Breast epithelium (tissue), 4 donors: ENCODE measurements at regions of chr5 and their contacts with region 1.

Region 1: GRCh38 chr5:1564182-1564748 is 40.5 kb upstream of the LPCAT1 start:
- DNase-seq: no peak
- H3K4me3 ChIP-seq: no peak overlapping the region
- H3K27ac ChIP-seq: no peak overlapping the region
- H3K4me1 ChIP-seq: no peaks in the 10 kb centered on the region
- H3K27me3 ChIP-seq: peaks cover 0 to 8% of the 10 kb centered on the region in 2 donors
- CTCF ChIP-seq: no peak
- POLR2A ChIP-seq: no peak

Region 2: DNA sequence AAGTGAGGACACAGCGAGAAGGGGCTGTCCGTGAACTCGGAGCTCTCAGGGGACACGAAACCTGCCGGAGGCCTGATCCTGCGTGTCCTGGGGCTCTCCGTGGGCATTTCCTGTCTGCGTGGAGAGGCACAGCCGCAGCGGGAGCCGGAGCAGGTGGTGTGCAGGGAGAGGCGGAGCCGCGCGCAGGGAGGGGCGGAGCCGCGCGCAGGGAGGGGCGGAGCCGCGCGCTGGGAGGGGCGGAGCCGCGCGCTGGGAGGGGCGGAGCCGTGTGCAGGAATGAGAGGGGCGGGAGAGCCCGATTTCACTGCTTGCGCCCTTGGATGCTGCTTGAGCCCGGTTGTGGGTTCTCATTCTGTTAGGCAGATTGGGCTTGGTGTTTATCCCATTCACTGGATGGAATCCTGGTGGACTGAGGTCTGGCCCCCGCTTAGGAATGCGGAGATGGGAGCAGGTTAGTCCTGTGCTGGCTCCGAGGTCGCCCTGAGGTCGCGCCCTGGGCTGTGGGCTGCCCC is 263.7 kb after region 1 on chr5:
- intact Hi-C with region 1: no loop called
- DNase-seq: no peak
- H3K4me3 ChIP-seq: no peak overlapping the region
- H3K27ac ChIP-seq: no peak overlapping the region
- H3K4me1 ChIP-seq: no peaks in the 10 kb centered on the region
- H3K27me3 ChIP-seq: no peaks in the 10 kb centered on the region
- CTCF ChIP-seq: no peak
- POLR2A ChIP-seq: no peak

Region 3: DNA sequence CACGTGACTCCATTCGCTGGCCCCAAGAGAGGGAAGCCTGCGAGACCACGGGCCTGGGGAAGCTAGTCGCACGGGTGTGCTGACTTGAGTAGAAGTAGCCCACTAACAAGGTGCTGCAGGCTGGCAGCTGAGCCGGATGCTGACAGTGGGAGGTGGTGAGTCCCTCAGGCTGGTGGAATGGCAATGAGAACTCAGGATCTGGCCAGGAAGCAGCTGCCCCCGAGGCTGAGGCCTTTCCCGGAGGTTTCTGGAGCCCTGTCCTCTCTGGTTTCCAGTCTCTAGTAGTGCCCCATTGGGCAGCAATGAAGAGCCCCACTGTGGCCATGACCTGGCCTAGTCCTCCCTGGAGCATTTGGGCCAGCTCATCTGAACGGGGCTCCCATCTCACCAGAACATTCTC is 685.2 kb after region 1 on chr5:
- intact Hi-C with region 1: loop called (anchors 5 kb)
- DNase-seq: no peak
- H3K4me3 ChIP-seq: no peak overlapping the region
- H3K27ac ChIP-seq: no peak overlapping the region
- H3K4me1 ChIP-seq: no peaks in the 10 kb centered on the region
- H3K27me3 ChIP-seq: no peaks in the 10 kb centered on the region
- CTCF ChIP-seq: no peak
- POLR2A ChIP-seq: no peak